ENCODE measurements at regions of chr1 and their contacts with region 1.

Region 1: DNA sequence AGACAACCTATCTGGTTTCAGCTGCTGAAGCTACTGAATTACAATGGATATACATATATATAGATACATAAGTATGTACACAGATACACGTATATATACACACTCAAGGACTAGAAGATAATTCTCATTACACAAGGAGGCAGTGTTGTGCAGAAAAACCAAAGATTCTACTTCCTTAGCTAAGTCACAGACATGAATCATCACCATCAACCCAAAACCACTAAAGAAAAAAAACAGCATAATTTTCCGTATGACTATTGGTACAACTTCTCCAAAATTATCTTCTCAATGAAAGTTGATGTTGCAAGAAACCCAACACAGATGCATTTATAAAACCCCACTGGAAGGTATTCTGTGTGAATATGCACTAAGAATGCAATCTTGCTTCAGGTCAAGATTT is 36.8 kb upstream of the RPF1 start:
- DNase-seq: no peak
- H3K4me3 ChIP-seq: no peak overlapping the region
- H3K27ac ChIP-seq: no peak overlapping the region
- H3K4me1 ChIP-seq: peaks cover 0 to 13% (median 7%) of the 10 kb centered on the region in 3 donors
- H3K27me3 ChIP-seq: peaks cover 0 to 7% (median 0%) of the 10 kb centered on the region in 4 donors
- CTCF ChIP-seq: peak in 5 of 6 experiments; percentile 32 to 74 (median 54)
- POLR2A ChIP-seq: no peak

Region 2: GRCh38 chr1:84726593-84727499 is 284.6 kb after region 1 on chr1:
- intact Hi-C with region 1: no loop called
- DNase-seq: no peak
- H3K4me3 ChIP-seq: no peak overlapping the region
- H3K27ac ChIP-seq: no peak overlapping the region
- H3K4me1 ChIP-seq: peaks cover 0 to 8% (median 0%) of the 10 kb centered on the region in 3 donors
- H3K27me3 ChIP-seq: no peaks in the 10 kb centered on the region
- CTCF ChIP-seq: no peak
- POLR2A ChIP-seq: no peak

Region 3: GRCh38 chr1:84753516-84754385 is 311.5 kb after region 1 on chr1:
- intact Hi-C with region 1: loop called (anchors 5 kb)
- DNase-seq: no peak
- H3K4me3 ChIP-seq: no peak overlapping the region
- H3K27ac ChIP-seq: no peak overlapping the region
- H3K4me1 ChIP-seq: peaks cover 1 to 31% (median 5%) of the 10 kb centered on the region in 3 donors
- H3K27me3 ChIP-seq: no peaks in the 10 kb centered on the region
- CTCF ChIP-seq: peak; percentile 66 to 95 (median 92)
- POLR2A ChIP-seq: no peak